SK-MEL-5 (cell line): ENCODE measurements at regions of chr11 and their contacts with region 1.

Region 1: DNA sequence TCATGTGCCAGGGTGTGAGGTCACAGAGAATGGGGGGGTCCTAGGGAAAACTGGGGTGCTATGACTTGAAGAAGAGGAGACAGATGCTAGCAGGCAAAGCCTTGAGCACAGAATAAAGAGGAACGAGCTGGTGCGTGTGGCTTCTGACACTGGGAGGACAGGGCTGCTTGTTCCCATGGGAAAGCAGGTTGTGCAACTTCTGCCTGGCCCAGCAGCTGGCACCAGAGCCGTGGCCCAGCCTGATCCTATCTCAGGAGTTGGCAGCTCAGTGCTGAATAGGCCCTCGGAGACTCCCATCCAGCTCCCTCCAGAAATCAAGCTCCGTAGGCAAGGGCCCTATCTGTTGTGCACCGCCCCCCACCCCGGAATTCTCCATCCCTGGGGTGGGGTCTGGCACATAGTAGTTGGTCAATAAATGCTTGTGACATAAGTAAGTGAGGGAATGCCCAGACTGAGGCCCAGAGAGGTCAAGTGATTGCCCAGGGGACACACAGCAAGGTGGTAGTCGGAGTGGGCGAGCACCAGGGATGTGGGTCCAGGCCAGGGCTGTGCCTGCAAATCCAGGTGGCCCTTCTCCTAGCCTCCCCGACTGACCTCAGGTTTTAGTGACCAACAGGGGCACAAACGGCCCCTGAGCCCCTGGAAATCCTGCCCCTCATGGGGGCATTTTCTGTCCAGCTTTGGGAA is 19.5 kb upstream of the FADD start:
- DNase-seq: no peak

Region 2: DNA sequence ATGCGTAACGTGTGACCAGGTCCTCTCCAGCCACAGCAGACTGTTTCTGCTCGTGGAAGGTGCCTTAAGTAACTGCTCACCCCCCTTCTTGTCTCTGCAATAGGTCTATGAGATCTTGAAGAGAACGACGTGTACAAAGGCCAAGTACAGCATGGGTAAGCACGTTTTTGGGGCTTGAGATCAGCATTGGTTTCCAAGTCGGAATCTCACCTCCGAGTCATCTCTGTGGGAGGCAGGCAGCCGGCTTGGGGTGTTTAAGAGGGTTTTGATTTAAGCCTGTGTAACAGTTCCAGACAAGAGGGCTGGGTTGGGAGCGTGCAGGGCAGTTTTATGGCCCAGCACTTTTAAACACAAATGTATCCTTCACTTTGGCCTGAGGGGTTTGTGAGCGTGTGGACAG is 75.4 kb before region 1 on chr11:
- in situ Hi-C with region 1: loop called (anchors 10 kb)
- DNase-seq: no peak